CD8-positive, alpha-beta memory T cell (primary cell): ENCODE measurements at regions of chr12 and their contacts with region 1.

Region 1: DNA sequence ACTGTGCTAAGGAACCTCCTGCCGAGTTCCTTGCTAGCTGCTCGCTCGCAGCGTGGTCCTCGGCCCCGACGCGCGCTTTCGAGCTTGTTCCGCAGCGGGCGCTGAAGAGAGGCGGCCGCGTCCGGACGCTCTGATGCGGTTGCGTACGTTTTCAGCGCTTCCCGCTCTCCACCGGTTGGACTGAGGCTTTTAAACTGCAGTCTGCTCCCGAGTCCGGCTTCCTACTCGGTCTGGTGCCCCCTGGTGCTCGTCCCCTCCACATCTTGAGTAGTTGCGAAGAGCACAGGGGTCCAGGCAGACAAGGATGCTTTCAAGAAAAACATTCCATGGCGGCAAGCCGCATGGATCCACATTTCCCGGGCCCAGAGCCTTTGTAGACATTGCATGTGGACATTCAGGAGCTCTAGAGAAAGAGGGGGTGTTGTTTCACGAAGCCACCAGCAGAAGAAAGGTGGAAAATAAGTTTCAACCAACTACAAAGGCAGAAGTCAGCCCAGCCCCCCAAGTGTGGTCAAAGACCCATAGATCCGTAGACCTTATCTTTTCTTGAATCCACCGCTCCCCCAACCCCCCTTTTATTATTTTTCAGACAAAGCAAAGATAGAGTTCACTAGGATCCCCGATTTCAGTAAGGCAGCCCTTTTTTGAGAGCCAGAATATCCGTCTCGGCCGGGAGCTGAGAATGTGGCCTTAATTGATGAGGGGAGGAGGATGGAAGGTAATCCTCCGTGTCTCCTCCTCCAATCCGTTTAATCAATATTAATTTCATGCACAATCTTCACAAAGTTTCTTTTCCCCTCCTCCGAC is 984 bp upstream of the WNK1 start:
- DNase-seq: peak; percentile 70 to 86 (median 81)
- H3K4me3 ChIP-seq: peak overlapping the region; percentile 56
- H3K4me3 Mint-ChIP-seq: no peak overlapping the region
- H3K27ac ChIP-seq: peak overlapping the region; percentile 71
- H3K27ac Mint-ChIP-seq: no peak overlapping the region
- H3K4me1 ChIP-seq: peaks cover 24% of the 10 kb centered on the region
- H3K4me1 Mint-ChIP-seq: peaks cover 12 to 24% (median 21%) of the 10 kb centered on the region in 3 donors
- H3K27me3 ChIP-seq: no peaks in the 10 kb centered on the region
- H3K27me3 Mint-ChIP-seq: no peaks in the 10 kb centered on the region

Region 2: DNA sequence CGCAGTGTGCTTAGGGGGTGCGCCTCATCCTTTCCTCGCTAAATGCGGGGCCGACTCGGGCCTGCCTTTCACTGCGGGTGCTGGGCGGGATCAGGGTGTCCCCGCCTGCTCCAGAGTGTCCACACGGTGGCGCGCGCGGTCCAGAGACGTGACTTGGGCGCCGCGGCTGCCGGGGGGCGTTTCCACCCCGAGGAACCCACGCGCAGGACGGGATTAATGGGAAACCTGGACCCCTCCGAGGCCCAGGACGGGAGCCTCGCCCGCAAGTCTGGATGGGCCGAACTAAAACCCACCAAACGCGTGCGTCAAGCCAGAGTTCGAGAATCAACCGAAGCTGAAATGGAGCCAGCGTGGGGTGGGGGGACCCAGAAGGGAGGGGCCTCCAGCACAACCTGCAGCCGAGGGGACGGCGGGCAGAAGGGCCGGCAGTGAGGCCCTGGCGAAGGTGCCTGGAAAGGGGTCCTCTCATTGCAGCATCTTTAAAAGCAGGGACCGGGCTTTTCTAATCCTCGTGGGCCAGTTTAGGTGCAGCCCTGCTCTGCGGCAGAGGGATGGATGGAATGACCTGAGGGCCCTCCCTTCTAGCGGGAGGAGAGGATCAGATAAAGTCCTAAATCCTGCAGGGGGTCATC is 181.5 kb before region 1 on chr12:
- CTCF ChIA-PET with region 1: interaction called, 66 read pairs
- POLR2A ChIA-PET with region 1: interaction called, 4 read pairs
- DNase-seq: peak; percentile 77 to 87 (median 85)
- H3K4me3 ChIP-seq: peak overlapping the region; percentile 65
- H3K4me3 Mint-ChIP-seq: peak overlapping the region; percentile 80 to 90 (median 82)
- H3K27ac ChIP-seq: peak overlapping the region; percentile 16
- H3K27ac Mint-ChIP-seq: peak overlapping the region in 7 of 8 donors; percentile 57 to 86 (median 63)
- H3K4me1 ChIP-seq: peaks cover 40% of the 10 kb centered on the region
- H3K4me1 Mint-ChIP-seq: peaks cover 42 to 49% (median 46%) of the 10 kb centered on the region in 3 donors
- H3K27me3 ChIP-seq: no peaks in the 10 kb centered on the region
- H3K27me3 Mint-ChIP-seq: no peaks in the 10 kb centered on the region

Region 3: DNA sequence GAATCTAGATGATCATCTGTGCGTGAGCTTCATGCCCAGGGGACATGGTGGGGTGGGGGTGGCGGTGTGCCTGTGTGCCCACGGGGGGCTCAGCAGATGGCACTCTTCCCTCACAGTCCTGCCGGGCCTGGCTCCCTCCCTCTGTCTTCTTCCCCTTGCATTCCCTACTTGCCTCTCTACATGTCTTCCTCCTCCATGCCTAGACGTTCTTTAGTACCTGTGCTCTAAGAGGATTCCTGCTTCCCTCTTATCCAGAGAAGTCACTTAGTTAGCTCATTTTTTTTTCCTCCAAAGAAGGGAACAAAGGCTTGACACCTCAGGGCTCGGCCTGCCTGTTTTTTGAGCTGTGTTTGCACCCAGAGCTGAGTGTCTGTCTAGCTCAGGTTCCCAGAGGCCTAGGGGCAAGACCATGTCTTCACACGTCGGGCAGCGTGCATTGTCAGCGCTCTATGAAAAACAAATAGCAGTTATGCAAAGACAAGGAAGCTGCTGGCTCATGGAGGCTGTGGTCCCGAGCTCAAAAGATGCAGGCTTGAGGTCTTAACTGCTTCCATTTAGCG is 136.9 kb before region 1 on chr12:
- CTCF ChIA-PET with region 1: interaction called, 21 read pairs
- POLR2A ChIA-PET with region 1: interaction called, 3 read pairs
- DNase-seq: peak in 3 of 5 donors; percentile 2 to 56 (median 19)
- H3K4me3 ChIP-seq: no peak overlapping the region
- H3K4me3 Mint-ChIP-seq: no peak overlapping the region
- H3K27ac ChIP-seq: no peak overlapping the region
- H3K27ac Mint-ChIP-seq: peak overlapping the region in 1 of 8 donors; percentile 84
- H3K4me1 ChIP-seq: peaks cover 16% of the 10 kb centered on the region
- H3K4me1 Mint-ChIP-seq: peaks cover 23 to 32% (median 28%) of the 10 kb centered on the region in 3 donors
- H3K27me3 ChIP-seq: no peaks in the 10 kb centered on the region
- H3K27me3 Mint-ChIP-seq: no peaks in the 10 kb centered on the region

Region 4: GRCh38 chr12:674272-674781 is 77.1 kb before region 1 on chr12:
- CTCF ChIA-PET with region 1: interaction called, 27 read pairs
- POLR2A ChIA-PET with region 1: interaction called, 11 read pairs
- DNase-seq: peak; percentile 49 to 85 (median 72)
- H3K4me3 ChIP-seq: peak overlapping the region; percentile 43
- H3K4me3 Mint-ChIP-seq: peak overlapping the region; percentile 70 to 92 (median 81)
- H3K27ac ChIP-seq: peak overlapping the region; percentile 82
- H3K27ac Mint-ChIP-seq: peak overlapping the region; percentile 93 to 99 (median 97)
- H3K4me1 ChIP-seq: peaks cover 42% of the 10 kb centered on the region
- H3K4me1 Mint-ChIP-seq: peaks cover 63 to 78% (median 76%) of the 10 kb centered on the region in 3 donors
- H3K27me3 ChIP-seq: no peaks in the 10 kb centered on the region
- H3K27me3 Mint-ChIP-seq: peaks cover 0 to 2% of the 10 kb centered on the region in 2 donors

Region 5: GRCh38 chr12:712172-712863 is 39.1 kb before region 1 on chr12:
- CTCF ChIA-PET with region 1: no interaction called
- POLR2A ChIA-PET with region 1: no interaction called
- DNase-seq: no peak
- H3K4me3 ChIP-seq: no peak overlapping the region
- H3K4me3 Mint-ChIP-seq: no peak overlapping the region
- H3K27ac ChIP-seq: no peak overlapping the region
- H3K27ac Mint-ChIP-seq: peak overlapping the region in 1 of 8 donors; percentile 41
- H3K4me1 ChIP-seq: no peaks in the 10 kb centered on the region
- H3K4me1 Mint-ChIP-seq: peaks cover 0 to 6% (median 0%) of the 10 kb centered on the region in 3 donors
- H3K27me3 ChIP-seq: no peaks in the 10 kb centered on the region
- H3K27me3 Mint-ChIP-seq: no peaks in the 10 kb centered on the region

Region 6: GRCh38 chr12:737122-737739 is 14.2 kb before region 1 on chr12:
- CTCF ChIA-PET with region 1: interaction called, 35 read pairs
- POLR2A ChIA-PET with region 1: interaction called, 6 read pairs
- DNase-seq: no peak
- H3K4me3 ChIP-seq: no peak overlapping the region
- H3K4me3 Mint-ChIP-seq: no peak overlapping the region
- H3K27ac ChIP-seq: no peak overlapping the region
- H3K27ac Mint-ChIP-seq: peak overlapping the region in 1 of 8 donors; percentile 50
- H3K4me1 ChIP-seq: no peaks in the 10 kb centered on the region
- H3K4me1 Mint-ChIP-seq: no peaks in the 10 kb centered on the region
- H3K27me3 ChIP-seq: no peaks in the 10 kb centered on the region
- H3K27me3 Mint-ChIP-seq: no peaks in the 10 kb centered on the region

Region 7: GRCh38 chr12:857611-858010 is 106.2 kb after region 1 on chr12:
- CTCF ChIA-PET with region 1: no interaction called
- POLR2A ChIA-PET with region 1: no interaction called
- DNase-seq: no peak
- H3K4me3 ChIP-seq: no peak overlapping the region
- H3K4me3 Mint-ChIP-seq: no peak overlapping the region
- H3K27ac ChIP-seq: no peak overlapping the region
- H3K27ac Mint-ChIP-seq: peak overlapping the region in 4 of 8 donors; percentile 10 to 87 (median 39)
- H3K4me1 ChIP-seq: no peaks in the 10 kb centered on the region
- H3K4me1 Mint-ChIP-seq: peaks cover 18 to 60% (median 50%) of the 10 kb centered on the region in 3 donors
- H3K27me3 ChIP-seq: no peaks in the 10 kb centered on the region
- H3K27me3 Mint-ChIP-seq: peaks cover 0 to 2% of the 10 kb centered on the region in 2 donors

Region 8: GRCh38 chr12:949453-950191 is 198.2 kb after region 1 on chr12 and contains the start of gene RAD52:
- CTCF ChIA-PET with region 1: interaction called, 12 read pairs
- POLR2A ChIA-PET with region 1: interaction called, 9 read pairs
- DNase-seq: peak; percentile 93 to 96 (median 95)
- H3K4me3 ChIP-seq: peak within 1 kb of the TSS; percentile 97
- H3K4me3 Mint-ChIP-seq: peak within 1 kb of the TSS; percentile 88 to 100 (median 98)
- H3K27ac ChIP-seq: peak within 1 kb of the TSS; percentile 83
- H3K27ac Mint-ChIP-seq: peak within 1 kb of the TSS; percentile 54 to 99 (median 94)
- H3K4me1 ChIP-seq: peaks cover 15% of the 10 kb centered on the region
- H3K4me1 Mint-ChIP-seq: peaks cover 26 to 34% (median 30%) of the 10 kb centered on the region in 3 donors
- H3K27me3 ChIP-seq: no peaks in the 10 kb centered on the region
- H3K27me3 Mint-ChIP-seq: peaks cover 0 to 3% of the 10 kb centered on the region in 2 donors
- total RNA-seq, gene RAD52: 13.2 to 13.8 TPM